ENCODE measurements at regions of chr1 and their contacts with region 1.

Region 1: DNA sequence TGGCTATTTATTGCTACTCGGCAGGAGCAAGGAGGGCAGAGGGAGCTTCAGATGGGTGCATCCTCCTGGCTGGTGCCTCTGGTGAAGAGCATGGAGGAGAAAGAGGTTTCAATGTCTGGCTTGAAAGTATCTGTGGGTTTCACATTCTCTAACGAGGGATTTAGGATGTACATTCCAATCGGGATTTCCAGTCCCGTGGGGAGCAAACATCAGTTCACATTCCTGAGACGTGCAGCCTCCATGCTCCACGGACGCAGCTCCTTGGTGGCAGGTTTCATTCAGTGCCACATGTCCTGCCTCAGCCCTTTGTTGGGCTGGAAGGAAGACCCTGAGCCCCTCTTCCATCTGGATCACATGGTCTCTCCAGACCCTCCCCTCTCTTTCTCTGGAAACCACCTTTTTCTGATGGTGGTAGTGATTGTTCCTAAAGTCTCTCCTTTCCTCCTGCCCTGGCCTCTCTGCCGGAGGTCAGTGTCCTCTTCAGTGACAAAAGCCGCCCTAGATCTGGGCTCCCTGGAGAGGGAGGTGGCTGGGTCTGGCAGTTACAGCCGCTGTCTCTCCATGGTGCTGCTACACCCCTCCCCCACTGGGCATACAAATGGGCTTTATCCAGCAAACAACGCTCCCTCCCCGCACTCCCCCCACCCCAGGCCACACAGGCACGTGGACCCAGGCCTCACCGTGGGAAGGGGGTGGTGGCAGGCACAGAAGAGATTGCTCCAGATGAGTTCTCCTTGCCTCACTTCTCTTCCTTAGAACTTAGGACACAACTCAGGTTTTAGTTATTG is 826 bp upstream of the CA14 start:
- DNase-seq: no peak
- ATAC-seq: no peak
- H3K4me3 Mint-ChIP-seq: no peak overlapping the region
- H3K27ac Mint-ChIP-seq: no peak overlapping the region
- H3K4me1 Mint-ChIP-seq: peaks cover 24% of the 10 kb centered on the region
- H3K27me3 Mint-ChIP-seq: peaks cover 48% of the 10 kb centered on the region

Region 2: DNA sequence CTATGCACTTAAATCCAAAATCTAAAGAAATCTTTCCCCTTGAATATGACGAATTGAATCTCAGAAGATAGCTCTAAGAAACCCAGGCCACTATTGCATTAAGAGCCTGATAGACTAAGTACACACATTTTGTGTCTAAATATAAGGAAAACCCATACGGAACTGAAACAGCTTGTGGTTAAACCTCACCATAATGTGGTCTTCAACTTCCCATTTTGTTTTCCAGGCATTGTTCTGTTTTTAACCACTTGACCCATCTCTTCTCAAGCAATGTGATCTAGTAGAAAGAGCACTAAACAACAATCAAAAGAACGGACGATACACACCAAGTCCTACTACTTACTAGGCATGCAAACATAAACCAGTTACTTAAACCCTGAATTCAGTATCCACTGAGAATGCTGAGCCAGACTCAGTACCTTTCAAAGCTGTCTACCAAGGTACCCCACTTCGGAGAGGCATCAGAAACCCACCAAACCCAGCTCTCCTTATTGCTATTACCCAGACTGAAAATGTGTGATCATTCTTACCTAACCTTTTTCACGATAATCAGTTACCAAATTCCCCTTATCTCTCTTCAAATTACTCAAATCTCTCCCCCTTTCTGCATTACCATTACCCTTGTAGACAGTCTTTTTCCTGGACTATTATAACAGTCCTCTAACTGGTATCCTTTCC is 259.0 kb before region 1 on chr1:
- CTCF ChIA-PET with region 1: no interaction called
- POLR2A ChIA-PET with region 1: no interaction called
- DNase-seq: no peak
- ATAC-seq: no peak
- H3K4me3 Mint-ChIP-seq: no peak overlapping the region
- H3K27ac Mint-ChIP-seq: no peak overlapping the region
- H3K4me1 Mint-ChIP-seq: peaks cover 20% of the 10 kb centered on the region
- H3K27me3 Mint-ChIP-seq: no peaks in the 10 kb centered on the region

Region 3: GRCh38 chr1:150243003-150243402 is 13.7 kb before region 1 on chr1:
- CTCF ChIA-PET with region 1: interaction called, 18 read pairs
- POLR2A ChIA-PET with region 1: no interaction called
- DNase-seq: no peak
- ATAC-seq: no peak
- H3K4me3 Mint-ChIP-seq: no peak overlapping the region
- H3K27ac Mint-ChIP-seq: no peak overlapping the region
- H3K4me1 Mint-ChIP-seq: no peaks in the 10 kb centered on the region
- H3K27me3 Mint-ChIP-seq: peaks cover 9% of the 10 kb centered on the region

Region 4: DNA sequence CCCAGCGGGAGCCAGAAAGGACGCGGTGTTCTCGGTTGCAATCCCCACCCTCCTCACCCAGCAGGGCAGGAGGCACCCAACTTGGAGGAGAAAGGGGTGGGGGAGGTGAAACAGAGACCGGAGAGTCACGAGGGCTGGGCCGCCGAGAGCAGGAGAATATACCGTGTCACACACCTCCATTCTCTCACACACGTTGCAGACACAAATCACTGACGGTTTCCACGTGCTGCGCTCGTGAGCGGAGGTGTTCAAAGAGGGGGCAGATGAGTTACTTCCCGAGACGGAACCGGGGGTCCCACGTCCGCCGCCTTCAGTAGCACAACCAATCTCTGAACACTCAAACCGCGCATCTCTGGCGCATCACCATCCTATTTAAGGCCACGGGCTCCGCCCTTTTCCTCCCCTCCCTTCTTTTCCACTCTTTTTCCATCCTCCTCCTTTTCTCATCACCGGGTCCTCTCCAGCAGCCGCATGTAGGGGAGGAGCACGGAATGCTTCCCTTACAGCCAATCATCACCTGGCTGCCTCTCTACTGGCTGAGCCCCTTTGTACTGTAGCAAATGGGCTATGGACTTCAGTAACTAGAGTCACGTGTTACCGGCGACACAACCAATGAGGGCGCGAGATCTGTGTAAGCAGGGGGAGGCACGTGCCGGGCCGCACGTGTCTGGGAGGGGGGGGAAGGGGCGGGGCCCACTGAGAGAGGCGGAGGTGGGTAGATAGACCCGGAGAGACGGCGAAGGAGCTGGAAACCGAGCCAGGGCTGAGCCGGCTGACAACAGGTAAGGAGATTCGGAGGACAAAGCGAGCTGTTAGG is 25.3 kb after region 1 on chr1 and contains the start of gene CIART:
- CTCF ChIA-PET with region 1: interaction called, 92 read pairs
- POLR2A ChIA-PET with region 1: interaction called, 5 read pairs
- DNase-seq: peak; percentile 83
- ATAC-seq: peak; percentile 92
- H3K4me3 Mint-ChIP-seq: peak within 1 kb of the TSS; percentile 71
- H3K27ac Mint-ChIP-seq: peak within 1 kb of the TSS; percentile 80
- H3K4me1 Mint-ChIP-seq: peaks cover 24% of the 10 kb centered on the region
- H3K27me3 Mint-ChIP-seq: peaks cover 11% of the 10 kb centered on the region
- total RNA-seq, gene CIART: 2.0 to 2.3 TPM

Region 5: DNA sequence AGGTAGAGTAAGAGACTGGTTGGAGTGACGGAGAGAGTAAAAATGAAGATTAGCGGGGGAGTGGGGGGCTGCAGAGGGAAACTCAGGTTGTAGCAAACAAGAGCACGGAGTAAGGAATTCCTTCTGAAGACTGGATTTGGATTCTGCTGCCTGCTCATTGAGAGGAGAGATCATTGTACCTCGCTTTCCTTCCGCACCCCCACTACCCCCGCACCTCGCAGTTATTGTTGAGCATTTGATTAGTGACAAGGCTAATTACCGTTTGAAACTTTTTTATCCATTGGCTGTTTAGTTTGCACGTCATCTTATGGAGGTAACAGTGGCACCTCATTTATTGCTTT is 65.0 kb after region 1 on chr1:
- CTCF ChIA-PET with region 1: interaction called, 22 read pairs
- POLR2A ChIA-PET with region 1: no interaction called
- DNase-seq: peak; percentile 22
- ATAC-seq: peak; percentile 4
- H3K4me3 Mint-ChIP-seq: peak overlapping the region; percentile 100
- H3K27ac Mint-ChIP-seq: peak overlapping the region; percentile 100
- H3K4me1 Mint-ChIP-seq: peaks cover 32% of the 10 kb centered on the region
- H3K27me3 Mint-ChIP-seq: no peaks in the 10 kb centered on the region

Region 6: GRCh38 chr1:150532868-150533302 is 276.1 kb after region 1 on chr1:
- CTCF ChIA-PET with region 1: interaction called, 13 read pairs
- POLR2A ChIA-PET with region 1: interaction called, 3 read pairs
- DNase-seq: no peak
- ATAC-seq: no peak
- H3K4me3 Mint-ChIP-seq: no peak overlapping the region
- H3K27ac Mint-ChIP-seq: peak overlapping the region; percentile 19
- H3K4me1 Mint-ChIP-seq: peaks cover 5% of the 10 kb centered on the region
- H3K27me3 Mint-ChIP-seq: no peaks in the 10 kb centered on the region